H1 (cell line): ENCODE measurements at regions of chr6 and their contacts with region 1.

Region 1: DNA sequence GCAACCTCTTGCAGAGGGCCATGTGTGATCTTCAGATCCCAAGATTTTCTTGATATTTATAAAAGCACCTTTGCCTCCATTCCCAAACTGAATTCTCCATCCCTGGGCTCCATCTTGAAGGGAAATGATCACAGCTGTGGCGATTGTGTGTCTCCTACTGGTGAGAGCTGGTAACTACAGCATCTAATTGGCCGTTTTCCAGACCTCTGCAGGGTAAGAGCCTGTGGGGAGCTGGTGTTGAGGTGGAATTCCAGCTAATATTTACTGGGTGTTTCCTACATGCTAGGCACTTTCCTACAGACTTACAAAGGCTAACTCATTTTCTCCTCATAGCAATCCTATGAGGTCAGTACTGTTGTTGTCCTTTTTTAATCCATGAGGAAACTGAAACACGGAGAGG is 59.2 kb upstream of the FNDC1 start:
- DNase-seq: peak in 1 of 2 experiments; percentile 73
- H3K4me3 ChIP-seq: no peak overlapping the region
- H3K27ac ChIP-seq: no peak overlapping the region
- H3K4me1 ChIP-seq: peaks cover 0 to 3% (median under 1%) of the 10 kb centered on the region in 4 experiments; a peak in 2 of 7 replicates
- H3K27me3 ChIP-seq: no peaks in the 10 kb centered on the region
- CTCF ChIP-seq: peak; percentile 56 to 90 (median 80)
- EP300 ChIP-seq: no peak
- POLR2A ChIP-seq: no peak
- RAD21 ChIP-seq: peak; percentile 84 to 88

Region 2: DNA sequence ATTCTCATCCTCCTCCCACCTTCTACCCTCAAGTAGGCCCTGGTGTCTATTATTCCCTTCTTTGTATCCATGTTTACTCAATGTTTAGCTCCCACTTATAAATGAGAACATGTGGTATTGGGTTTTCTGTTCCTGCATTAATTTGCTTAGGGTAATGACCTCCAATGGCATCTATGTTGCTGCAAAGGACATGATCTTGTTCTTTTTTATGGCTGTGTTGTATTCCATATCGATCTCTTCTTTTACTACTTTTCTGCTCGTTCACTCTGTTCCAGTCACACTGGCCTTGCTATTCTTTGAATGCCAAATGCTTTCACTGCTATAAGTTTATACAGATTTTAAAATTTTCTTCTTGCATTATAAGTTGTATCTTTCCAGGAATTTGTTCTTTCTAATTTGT is 167.7 kb before region 1 on chr6:
- CTCF ChIA-PET with region 1: no interaction called
- POLR2A ChIA-PET with region 1: no interaction called
- DNase-seq: no peak
- H3K4me3 ChIP-seq: no peak overlapping the region
- H3K27ac ChIP-seq: no peak overlapping the region
- H3K4me1 ChIP-seq: peaks cover 0 to 15% (median 6%) of the 10 kb centered on the region in 4 experiments; a peak in 6 of 7 replicates
- H3K27me3 ChIP-seq: peaks cover 0 to 4% (median 0%) of the 10 kb centered on the region in 4 experiments; a peak in 2 of 7 replicates
- CTCF ChIP-seq: no peak
- EP300 ChIP-seq: no peak
- POLR2A ChIP-seq: no peak
- RAD21 ChIP-seq: no peak

Region 3: DNA sequence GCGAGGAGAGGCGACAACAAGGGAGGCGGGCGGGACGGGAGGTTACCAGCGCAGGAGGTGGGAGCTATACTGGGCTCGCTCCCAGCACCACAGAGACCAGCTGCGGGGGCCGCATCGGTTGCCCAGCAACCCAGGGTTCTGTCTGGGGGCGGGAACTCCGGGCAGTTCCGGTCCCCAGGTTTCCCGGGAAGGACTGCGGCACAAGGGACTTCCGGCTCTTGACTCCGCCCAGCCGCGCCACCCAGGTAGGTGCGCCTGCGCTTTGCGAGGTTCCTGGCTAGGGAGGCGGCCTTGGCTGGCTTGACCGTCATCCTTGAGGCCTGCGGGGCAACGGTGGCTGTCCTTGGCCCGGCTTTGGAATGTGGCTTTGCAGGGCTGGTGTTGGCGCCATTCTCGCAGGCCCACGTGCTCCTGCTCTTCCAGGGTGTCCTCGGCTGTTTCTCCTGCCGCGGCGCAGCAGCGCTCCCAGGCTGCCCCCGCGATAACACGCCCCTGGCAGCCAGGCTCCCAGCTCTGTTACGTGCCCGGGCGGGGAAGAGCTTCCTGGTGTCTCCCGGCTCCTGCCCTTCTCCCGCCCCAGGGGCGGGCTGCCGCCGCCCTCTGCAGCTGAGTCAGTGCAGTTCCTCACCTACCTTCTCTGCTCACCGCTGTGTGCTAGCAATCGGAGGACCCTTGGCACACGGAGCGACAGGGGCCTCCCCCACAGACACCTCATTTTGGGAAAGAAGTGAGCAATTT is 110.2 kb before region 1 on chr6 and contains the start of gene RSPH3:
- CTCF ChIA-PET with region 1: interaction called, 11 read pairs
- POLR2A ChIA-PET with region 1: interaction called, 4 read pairs
- DNase-seq: peak; percentile 93 to 96
- H3K4me3 ChIP-seq: peak within 1 kb of the TSS; percentile 68 to 82 (median 78)
- H3K27ac ChIP-seq: peak within 1 kb of the TSS; percentile 92
- H3K4me1 ChIP-seq: peaks cover 0 to 2% (median 0%) of the 10 kb centered on the region in 4 experiments; a peak in 2 of 7 replicates
- H3K27me3 ChIP-seq: no peaks in the 10 kb centered on the region
- CTCF ChIP-seq: peak; percentile 16 to 18 (median 17); a peak in 2 of 4 replicates
- EP300 ChIP-seq: no peak
- POLR2A ChIP-seq: peak; percentile 96 to 98
- RAD21 ChIP-seq: peak; percentile 42 to 48; a peak in 3 of 4 replicates
- total RNA-seq, gene RSPH3: 2.7 and 3.8 TPM in 2 replicates

Region 4: DNA sequence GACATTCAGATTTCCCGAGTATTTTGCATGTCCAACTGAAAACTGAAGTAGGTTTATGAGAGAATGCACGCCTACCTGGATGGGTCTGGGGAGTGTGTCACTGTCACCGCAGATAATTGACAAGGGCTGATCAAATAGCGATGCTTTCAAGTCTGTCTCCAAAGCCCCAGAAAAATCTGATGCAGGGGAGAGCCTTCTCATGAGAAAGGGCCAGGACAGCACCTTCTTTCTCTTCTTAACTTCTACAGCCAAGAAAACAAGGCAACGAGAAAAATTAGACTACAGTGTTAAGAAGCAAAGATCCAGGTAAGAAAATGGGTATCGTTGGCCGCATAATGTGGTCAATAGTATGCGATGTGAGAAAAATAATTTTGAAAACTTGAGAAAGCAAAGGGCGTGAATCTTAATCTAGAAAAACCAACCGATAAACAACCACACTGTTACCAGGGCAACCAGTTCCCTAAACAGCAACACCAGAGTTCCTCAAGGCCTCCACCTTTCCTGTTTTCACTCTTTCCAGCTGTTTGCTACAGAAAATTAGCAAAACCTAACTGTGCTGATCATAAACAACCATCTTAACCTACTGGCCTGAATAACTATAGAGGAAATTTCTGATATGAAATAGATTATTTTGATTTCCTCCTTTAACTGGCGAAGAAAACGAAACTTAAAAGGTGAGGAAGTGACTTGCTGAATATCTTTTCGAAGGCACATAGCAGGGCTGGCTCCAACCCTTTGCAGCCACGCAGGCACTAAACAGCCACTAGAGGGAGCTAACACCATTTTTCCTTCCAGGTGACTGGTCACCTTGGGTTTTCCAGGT is 67.8 kb before region 1 on chr6:
- CTCF ChIA-PET with region 1: interaction called, 144 read pairs
- POLR2A ChIA-PET with region 1: interaction called, 4 read pairs
- DNase-seq: peak; percentile 59 to 73
- H3K4me3 ChIP-seq: peak overlapping the region in 1 of 4 experiments; percentile 24; a peak in 1 of 8 replicates
- H3K27ac ChIP-seq: peak overlapping the region; percentile 69
- H3K4me1 ChIP-seq: no peaks in the 10 kb centered on the region; a peak in 1 of 7 replicates
- H3K27me3 ChIP-seq: no peaks in the 10 kb centered on the region
- CTCF ChIP-seq: peak; percentile 88 to 97 (median 92)
- EP300 ChIP-seq: no peak
- POLR2A ChIP-seq: no peak
- RAD21 ChIP-seq: peak; percentile 83 to 87

Region 5: DNA sequence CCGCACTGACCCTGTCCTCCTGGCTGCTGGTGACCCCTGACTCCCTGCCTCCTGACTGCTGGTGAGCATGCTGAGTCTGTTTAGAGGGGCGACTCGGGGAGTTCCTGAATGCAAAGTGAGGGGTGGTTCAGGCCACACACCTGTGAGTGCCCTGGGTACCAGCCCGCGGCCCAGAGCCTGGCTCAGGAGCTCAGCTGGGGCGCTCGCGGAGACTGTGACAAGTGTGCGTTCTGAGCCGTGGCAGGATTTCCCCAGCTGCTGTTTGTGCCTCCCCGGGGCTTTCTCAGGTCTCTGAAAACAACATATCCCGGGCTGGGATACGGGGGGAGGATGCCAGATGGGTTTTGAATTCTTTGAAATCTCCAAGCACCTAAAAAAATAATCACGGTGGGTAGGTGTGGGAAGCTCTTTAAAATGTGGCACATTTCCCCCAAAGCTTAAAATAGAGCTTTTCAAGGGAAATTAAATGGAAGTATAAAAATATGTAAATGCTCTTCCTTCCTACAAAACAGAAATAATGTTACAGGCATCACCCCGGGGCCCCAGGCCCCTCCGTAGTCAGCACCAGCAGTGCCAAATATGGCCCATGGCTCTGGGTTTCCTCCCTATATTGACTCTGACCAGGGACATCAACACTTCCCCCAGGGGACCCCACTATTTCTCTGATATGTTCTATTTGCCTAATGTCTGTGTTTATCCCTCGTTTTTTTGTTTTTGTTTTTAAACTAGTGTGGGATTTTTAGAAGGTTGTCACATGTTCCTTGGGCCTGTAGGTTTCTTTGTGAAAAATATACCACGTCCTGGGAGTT is 15.4 kb before region 1 on chr6:
- CTCF ChIA-PET with region 1: interaction called, 26 read pairs
- POLR2A ChIA-PET with region 1: no interaction called
- DNase-seq: peak in 1 of 2 experiments; percentile 46
- H3K4me3 ChIP-seq: no peak overlapping the region
- H3K27ac ChIP-seq: no peak overlapping the region
- H3K4me1 ChIP-seq: peaks cover 0 to 7% (median under 1%) of the 10 kb centered on the region in 4 experiments; a peak in 1 of 7 replicates
- H3K27me3 ChIP-seq: no peaks in the 10 kb centered on the region
- CTCF ChIP-seq: no peak
- EP300 ChIP-seq: no peak
- POLR2A ChIP-seq: no peak
- RAD21 ChIP-seq: no peak

Region 6: DNA sequence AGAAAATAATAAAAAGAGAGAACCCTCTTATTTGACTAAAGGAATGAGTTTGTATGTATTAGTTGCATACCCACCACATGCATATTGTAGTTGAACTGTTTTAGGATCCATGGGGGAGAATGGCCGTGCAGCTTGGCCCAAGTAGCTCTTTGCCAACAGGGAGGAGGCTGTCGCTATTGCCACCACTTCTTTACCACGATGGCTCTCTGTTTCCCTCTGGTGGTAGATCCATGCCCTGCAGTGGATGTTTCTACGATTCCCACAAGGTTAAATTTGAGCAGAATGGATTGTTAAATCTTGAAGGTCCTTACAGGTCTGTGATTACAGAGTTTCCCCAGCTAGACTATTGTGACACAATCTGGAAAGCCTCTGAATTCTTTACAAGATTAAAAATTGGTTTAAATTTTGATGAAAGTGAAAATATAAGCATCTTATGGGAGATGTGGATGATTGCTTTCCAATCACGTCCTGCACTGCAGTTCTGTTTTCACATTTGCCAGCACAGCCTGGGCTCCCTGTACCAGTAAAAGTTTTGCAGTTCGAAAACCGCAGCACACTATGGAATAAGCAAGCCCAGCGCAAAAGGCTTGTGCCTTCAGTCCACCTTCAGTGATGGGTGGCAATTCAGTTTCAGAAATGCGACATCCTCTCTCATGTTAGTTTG is 24.8 kb after region 1 on chr6:
- CTCF ChIA-PET with region 1: interaction called, 27 read pairs
- POLR2A ChIA-PET with region 1: no interaction called
- DNase-seq: peak; percentile 64 to 96
- H3K4me3 ChIP-seq: no peak overlapping the region
- H3K27ac ChIP-seq: no peak overlapping the region
- H3K4me1 ChIP-seq: no peaks in the 10 kb centered on the region
- H3K27me3 ChIP-seq: no peaks in the 10 kb centered on the region
- CTCF ChIP-seq: peak; percentile 73 to 96 (median 94)
- EP300 ChIP-seq: no peak
- POLR2A ChIP-seq: no peak
- RAD21 ChIP-seq: peak; percentile 92 to 93